ENCODE measurements at regions of chr7 and their contacts with region 1.

Region 1: GRCh38 chr7:142711746-142712619 is 37.3 kb upstream of the PRSS1 start:
- DNase-seq: peak; percentile 66
- ATAC-seq: peak; percentile 75; the same call in 1 of the 2 replicates
- H3K4me3 ChIP-seq: no peak overlapping the region
- H3K27ac ChIP-seq: no peak overlapping the region
- H3K4me1 ChIP-seq: no peaks in the 10 kb centered on the region
- H3K27me3 ChIP-seq: peaks cover 3% of the 10 kb centered on the region; the same call in 1 of the 2 replicates
- CTCF ChIP-seq: peak; percentile 85

Region 2: GRCh38 chr7:142603870-142604448 is 108.0 kb before region 1 on chr7:
- CTCF ChIA-PET with region 1: interaction called, 3 read pairs
- POLR2A ChIA-PET with region 1: no interaction called
- intact Hi-C with region 1: loop called (anchors 1 kb)
- DNase-seq: peak; percentile 84
- ATAC-seq: peak; percentile 75
- H3K4me3 ChIP-seq: peak overlapping the region; percentile 74
- H3K27ac ChIP-seq: no peak overlapping the region
- H3K4me1 ChIP-seq: peaks cover 8% of the 10 kb centered on the region
- H3K27me3 ChIP-seq: no peaks in the 10 kb centered on the region
- CTCF ChIP-seq: peak; percentile 93

Region 3: GRCh38 chr7:142774826-142775225 is 62.8 kb after region 1 on chr7:
- CTCF ChIA-PET with region 1: no interaction called
- POLR2A ChIA-PET with region 1: no interaction called
- intact Hi-C with region 1: loop called (anchors 2 kb)
- DNase-seq: peak; percentile 85
- ATAC-seq: peak; percentile 54
- H3K4me3 ChIP-seq: no peak overlapping the region
- H3K27ac ChIP-seq: peak overlapping the region; percentile 83
- H3K4me1 ChIP-seq: peaks cover 25% of the 10 kb centered on the region
- H3K27me3 ChIP-seq: no peaks in the 10 kb centered on the region
- CTCF ChIP-seq: no peak

Region 4: DNA sequence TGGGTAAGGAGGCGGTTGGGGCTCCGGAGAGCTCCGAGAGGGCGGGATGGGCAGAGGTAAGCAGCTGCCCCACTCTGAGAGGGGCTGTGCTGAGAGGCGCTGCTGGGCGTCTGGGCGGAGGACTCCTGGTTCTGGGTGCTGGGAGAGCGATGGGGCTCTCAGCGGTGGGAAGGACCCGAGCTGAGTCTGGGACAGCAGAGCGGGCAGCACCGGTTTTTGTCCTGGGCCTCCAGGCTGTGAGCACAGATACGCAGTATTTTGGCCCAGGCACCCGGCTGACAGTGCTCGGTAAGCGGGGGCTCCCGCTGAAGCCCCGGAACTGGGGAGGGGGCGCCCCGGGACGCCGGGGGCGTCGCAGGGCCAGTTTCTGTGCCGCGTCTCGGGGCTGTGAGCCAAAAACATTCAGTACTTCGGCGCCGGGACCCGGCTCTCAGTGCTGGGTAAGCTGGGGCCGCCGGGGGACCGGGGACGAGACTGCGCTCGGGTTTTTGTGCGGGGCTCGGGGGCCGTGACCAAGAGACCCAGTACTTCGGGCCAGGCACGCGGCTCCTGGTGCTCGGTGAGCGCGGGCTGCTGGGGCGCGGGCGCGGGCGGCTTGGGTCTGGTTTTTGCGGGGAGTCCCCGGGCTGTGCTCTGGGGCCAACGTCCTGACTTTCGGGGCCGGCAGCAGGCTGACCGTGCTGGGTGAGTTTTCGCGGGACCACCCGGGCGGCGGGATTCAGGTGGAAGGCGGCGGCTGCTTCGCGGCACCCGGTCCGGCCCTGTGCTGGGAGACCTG is 84.8 kb after region 1 on chr7:
- CTCF ChIA-PET with region 1: no interaction called
- POLR2A ChIA-PET with region 1: no interaction called
- intact Hi-C with region 1: no loop called
- DNase-seq: peak; percentile 23
- ATAC-seq: peak; percentile 42
- H3K4me3 ChIP-seq: peak overlapping the region; percentile 83
- H3K27ac ChIP-seq: peak overlapping the region; percentile 99
- H3K4me1 ChIP-seq: peaks cover 65% of the 10 kb centered on the region
- H3K27me3 ChIP-seq: no peaks in the 10 kb centered on the region
- CTCF ChIP-seq: no peak

Region 5: GRCh38 chr7:142847353-142847752 is 135.4 kb after region 1 on chr7:
- CTCF ChIA-PET with region 1: no interaction called
- POLR2A ChIA-PET with region 1: no interaction called
- intact Hi-C with region 1: loop called (anchors 5 kb)
- DNase-seq: peak; percentile 69
- ATAC-seq: peak; percentile 94
- H3K4me3 ChIP-seq: no peak overlapping the region
- H3K27ac ChIP-seq: 0 out of 2 replicates have a peak overlapping the region, but pooled peaks have one; percentile 29
- H3K4me1 ChIP-seq: peaks cover 9% of the 10 kb centered on the region
- H3K27me3 ChIP-seq: no peaks in the 10 kb centered on the region
- CTCF ChIP-seq: no peak